ENCODE measurements at regions of chr9 and their contacts with region 1.

Region 1: DNA sequence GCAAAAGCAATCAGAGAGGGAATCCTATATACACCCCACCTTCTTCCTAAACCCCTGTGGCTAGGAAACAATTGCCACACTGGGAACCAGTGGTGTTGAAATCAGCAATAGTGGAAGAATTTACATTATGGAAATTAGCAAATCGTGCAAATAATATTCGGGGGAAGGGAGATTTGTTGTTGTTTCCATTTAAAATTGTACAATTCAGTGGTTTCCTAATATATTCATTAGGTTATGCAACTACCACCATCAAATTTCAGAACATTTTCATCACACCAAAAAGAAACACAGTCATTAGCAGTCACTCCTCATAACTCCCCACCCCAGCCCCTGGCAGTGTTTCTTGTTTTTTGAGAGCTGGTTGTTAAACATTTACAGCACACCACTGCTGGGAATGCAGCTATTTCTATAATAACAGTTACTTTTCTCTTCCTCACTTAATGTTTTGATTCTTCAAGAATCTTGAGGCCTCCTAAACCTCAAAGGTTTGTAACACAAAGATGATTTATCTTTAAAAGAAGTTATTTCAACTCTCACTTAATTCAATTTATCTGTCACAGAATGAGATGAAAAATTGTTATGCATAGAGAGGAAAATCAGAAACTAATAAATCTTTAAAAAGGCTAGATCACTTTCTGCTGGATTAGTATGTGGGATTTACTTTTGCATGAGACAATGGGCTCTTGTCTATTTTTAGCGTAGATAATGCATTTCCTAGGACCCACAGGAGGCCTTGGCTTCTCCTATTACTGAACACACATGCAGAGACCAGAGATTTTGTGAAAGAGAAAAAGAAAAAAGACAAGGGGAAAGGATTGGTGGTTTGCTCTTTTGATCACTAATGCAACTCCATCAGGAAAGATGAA is 91.8 kb upstream of the DAPK1 start:
- DNase-seq: peak; percentile 77 to 91 (median 86)
- H3K4me3 ChIP-seq: peak overlapping the region in 1 of 3 experiments; percentile 35
- H3K4me3 Mint-ChIP-seq: peak overlapping the region in 1 of 2 donors; percentile 54
- H3K27ac ChIP-seq: peak overlapping the region; percentile 49 to 93
- H3K27ac Mint-ChIP-seq: peak overlapping the region; percentile 91 to 97 (median 94)
- H3K4me1 ChIP-seq: peaks cover 30 to 36% of the 10 kb centered on the region in 2 donors
- H3K4me1 Mint-ChIP-seq: peaks cover 40% of the 10 kb centered on the region
- H3K27me3 ChIP-seq: no peaks in the 10 kb centered on the region
- H3K27me3 Mint-ChIP-seq: peaks cover 1 to 3% (median 2%) of the 10 kb centered on the region in 3 donors
- CTCF ChIP-seq: no peak

Region 2: DNA sequence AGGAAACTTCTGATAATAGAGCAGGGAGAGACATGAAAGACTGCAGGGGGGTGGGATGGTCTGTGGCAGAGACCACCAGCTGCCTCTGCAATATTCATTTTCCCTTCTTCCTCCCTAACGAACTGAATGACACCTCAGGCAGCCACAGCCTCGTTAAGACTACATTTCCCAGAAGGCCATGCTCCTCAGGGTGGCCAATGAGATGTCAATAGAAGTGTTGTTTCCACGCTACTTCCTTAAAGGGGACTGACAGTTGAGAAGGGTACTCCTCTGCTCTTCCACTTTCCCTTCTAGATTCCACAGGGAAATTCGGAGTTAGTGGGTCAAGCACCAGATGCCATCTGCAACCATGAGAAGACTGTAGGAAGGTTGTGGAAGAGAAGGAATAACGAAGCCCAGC is 39.7 kb after region 1 on chr9:
- intact Hi-C with region 1: no loop called
- DNase-seq: peak; percentile 48 to 81 (median 76)
- H3K4me3 ChIP-seq: peak overlapping the region; percentile 20 to 70 (median 45)
- H3K4me3 Mint-ChIP-seq: peak overlapping the region; percentile 67 to 90
- H3K27ac ChIP-seq: peak overlapping the region in 1 of 2 donors; percentile 71
- H3K27ac Mint-ChIP-seq: peak overlapping the region in 6 of 7 donors; percentile 64 to 90 (median 78)
- H3K4me1 ChIP-seq: peaks cover 6 to 9% of the 10 kb centered on the region in 2 donors
- H3K4me1 Mint-ChIP-seq: peaks cover 11% of the 10 kb centered on the region
- H3K27me3 ChIP-seq: no peaks in the 10 kb centered on the region
- H3K27me3 Mint-ChIP-seq: peaks cover 0 to 2% (median 0%) of the 10 kb centered on the region in 3 donors
- CTCF ChIP-seq: no peak

Region 3: DNA sequence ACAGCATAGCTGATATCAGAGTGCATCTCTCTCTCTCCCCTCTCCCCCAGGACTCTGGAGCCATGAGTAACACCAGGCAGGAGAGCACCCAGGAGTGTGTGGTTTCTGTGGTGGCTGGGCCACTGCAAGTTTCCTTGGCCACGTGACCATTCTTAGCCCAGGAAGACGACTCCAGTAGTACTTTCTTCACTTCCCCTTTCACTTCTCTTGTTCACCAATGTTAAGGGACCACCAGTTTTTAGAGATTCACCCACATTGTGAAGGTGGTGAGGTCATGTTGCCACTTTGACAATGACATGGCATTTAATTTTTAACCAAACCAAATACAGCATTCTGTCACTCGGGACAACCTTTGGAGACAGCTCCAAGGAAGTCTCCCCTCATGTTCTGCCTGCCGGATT is 73.9 kb after region 1 on chr9:
- intact Hi-C with region 1: loop called in 1 of 2 experiments (anchors 5 kb)
- DNase-seq: peak; percentile 94 to 99 (median 98)
- H3K4me3 ChIP-seq: peak overlapping the region in 2 of 3 experiments; percentile 12 to 51
- H3K4me3 Mint-ChIP-seq: peak overlapping the region in 1 of 2 donors; percentile 51
- H3K27ac ChIP-seq: peak overlapping the region; percentile 43 to 81
- H3K27ac Mint-ChIP-seq: peak overlapping the region; percentile 87 to 95 (median 92)
- H3K4me1 ChIP-seq: peaks cover 32 to 37% of the 10 kb centered on the region in 2 donors
- H3K4me1 Mint-ChIP-seq: peaks cover 29% of the 10 kb centered on the region
- H3K27me3 ChIP-seq: no peaks in the 10 kb centered on the region
- H3K27me3 Mint-ChIP-seq: no peaks in the 10 kb centered on the region
- CTCF ChIP-seq: no peak

Region 4: GRCh38 chr9:87599901-87600610 is 194.1 kb after region 1 on chr9:
- intact Hi-C with region 1: loop called in 1 of 2 experiments (anchors 10 kb)
- DNase-seq: no peak
- H3K4me3 ChIP-seq: no peak overlapping the region
- H3K4me3 Mint-ChIP-seq: no peak overlapping the region
- H3K27ac ChIP-seq: peak overlapping the region; percentile 81 to 97
- H3K27ac Mint-ChIP-seq: peak overlapping the region; percentile 16 to 97 (median 95)
- H3K4me1 ChIP-seq: peaks cover 36 to 58% of the 10 kb centered on the region in 2 donors
- H3K4me1 Mint-ChIP-seq: peaks cover 78% of the 10 kb centered on the region
- H3K27me3 ChIP-seq: no peaks in the 10 kb centered on the region
- H3K27me3 Mint-ChIP-seq: peaks cover 0 to 7% (median 0%) of the 10 kb centered on the region in 3 donors
- CTCF ChIP-seq: no peak

Region 5: GRCh38 chr9:87713278-87713987 is 307.5 kb after region 1 on chr9:
- intact Hi-C with region 1: loop called in 1 of 2 experiments (anchors 5 kb)
- DNase-seq: peak; percentile 99 to 100 (median 99)
- H3K4me3 ChIP-seq: peak overlapping the region in 2 of 3 experiments; percentile 15 to 23
- H3K4me3 Mint-ChIP-seq: peak overlapping the region in 1 of 2 donors; percentile 78
- H3K27ac ChIP-seq: peak overlapping the region; percentile 56 to 69
- H3K27ac Mint-ChIP-seq: peak overlapping the region; percentile 80 to 94 (median 90)
- H3K4me1 ChIP-seq: peaks cover 26 to 36% of the 10 kb centered on the region in 2 donors
- H3K4me1 Mint-ChIP-seq: peaks cover 52% of the 10 kb centered on the region
- H3K27me3 ChIP-seq: peaks cover 0 to 2% of the 10 kb centered on the region in 2 donors
- H3K27me3 Mint-ChIP-seq: peaks cover 4 to 7% (median 5%) of the 10 kb centered on the region in 3 donors
- CTCF ChIP-seq: no peak

Measured in CD14-positive monocyte (primary cell).